ENCODE measurements at regions of chr9 and their contacts with region 1.

Region 1: DNA sequence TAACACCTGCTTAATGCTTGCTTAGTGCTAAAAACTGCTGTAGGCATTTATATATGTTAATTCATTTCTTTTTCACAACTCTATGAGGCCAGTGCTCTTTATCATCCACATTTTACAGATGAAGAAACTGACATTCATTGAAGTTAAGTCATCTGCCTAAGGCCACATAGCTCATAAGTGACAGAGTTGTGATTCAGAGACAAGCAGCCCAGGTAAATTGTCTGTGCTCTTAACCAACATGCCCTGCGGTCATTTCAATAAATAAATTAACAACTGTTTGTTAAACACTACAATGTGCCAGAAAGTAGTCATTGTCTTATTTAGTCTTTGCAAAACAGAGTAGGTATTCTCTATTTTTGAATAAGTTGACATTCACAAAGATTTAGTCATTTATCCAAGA is 1354.4 kb upstream of the C9orf72 start:
- DNase-seq: no peak

Region 2: DNA sequence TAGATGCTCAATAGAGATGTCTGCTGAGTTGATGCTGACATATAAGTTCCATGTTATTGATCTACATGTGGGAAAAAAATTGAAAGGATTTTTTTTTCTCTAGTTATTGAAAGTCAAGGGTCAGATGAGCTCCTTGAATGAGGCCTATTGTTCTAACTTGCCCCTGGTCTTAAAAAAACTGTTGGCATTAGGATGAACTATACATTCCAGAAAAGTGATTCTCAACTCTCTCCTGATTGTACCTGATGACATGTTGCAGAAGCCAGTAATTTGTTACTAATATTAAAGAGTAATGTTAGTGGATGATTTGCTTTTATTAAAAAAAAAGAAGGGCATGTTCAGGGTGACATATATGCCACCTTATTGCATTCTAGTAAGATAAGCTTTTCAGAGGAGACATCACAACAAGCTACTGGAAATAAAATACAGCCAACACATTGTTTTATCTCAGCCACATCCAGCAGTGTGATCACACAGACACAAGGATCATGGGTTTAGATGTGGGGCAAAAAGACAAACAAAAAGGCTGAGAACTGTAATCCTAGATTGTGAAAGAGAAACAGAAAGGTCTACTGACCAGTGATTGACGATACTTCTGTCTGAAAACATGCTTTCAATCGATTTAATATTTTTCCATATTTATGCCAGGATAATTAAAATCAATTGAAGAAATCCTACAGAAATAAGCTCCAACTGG is 40.4 kb before region 1 on chr9:
- intact Hi-C with region 1: loop called in 1 of 2 experiments (anchors 2 kb)
- DNase-seq: no peak

Region 3: DNA sequence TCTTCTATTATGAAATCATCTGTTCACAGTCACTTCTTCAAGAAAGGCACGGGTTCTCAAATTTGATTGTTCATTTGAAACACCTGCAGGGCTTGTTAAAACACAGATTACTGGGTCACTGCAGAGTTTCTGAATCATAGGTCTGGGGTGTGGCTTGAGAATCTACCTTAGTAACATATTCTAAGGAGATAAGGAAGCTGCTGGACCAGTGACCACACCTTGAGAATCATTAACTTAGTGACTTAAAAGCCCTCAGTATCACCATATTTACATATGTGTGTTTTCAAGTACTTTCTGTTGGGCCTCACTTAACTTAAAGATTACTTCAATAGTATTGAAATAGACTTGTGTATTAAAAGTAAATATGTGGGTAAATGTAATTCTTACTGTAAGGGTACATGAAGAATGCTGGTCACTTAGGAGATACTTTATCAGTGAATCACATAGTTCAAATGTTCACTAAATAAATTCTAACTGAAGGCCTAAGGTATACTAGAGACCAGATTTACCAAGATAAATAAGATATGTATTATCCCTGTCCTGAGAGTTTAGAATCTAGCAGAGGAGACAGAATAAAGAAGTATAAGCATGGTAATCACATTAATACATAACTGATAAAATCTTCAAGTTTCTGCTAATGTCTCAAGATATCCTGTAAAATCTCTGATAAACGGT is 12.3 kb before region 1 on chr9:
- intact Hi-C with region 1: no loop called
- DNase-seq: no peak

Region 4: DNA sequence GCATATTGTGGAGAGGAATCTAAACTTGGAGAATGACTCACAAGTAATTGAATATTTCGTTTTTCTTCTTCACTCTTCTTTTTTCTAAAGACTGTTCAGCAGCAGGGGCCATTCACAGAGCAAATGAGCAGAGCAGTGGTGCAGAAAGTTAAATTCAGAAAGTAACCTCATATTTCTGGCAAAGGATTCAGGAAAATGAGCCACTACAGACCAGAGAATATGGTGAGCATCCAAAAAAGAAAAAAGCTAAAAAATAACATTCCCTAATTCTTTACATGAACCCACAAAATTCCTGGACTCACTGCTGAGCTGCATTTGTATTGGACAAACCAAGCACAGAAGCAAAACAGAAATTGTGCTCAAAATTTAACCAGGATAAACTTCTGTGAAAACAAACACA is 132.3 kb after region 1 on chr9:
- intact Hi-C with region 1: no loop called
- DNase-seq: no peak

Region 5: DNA sequence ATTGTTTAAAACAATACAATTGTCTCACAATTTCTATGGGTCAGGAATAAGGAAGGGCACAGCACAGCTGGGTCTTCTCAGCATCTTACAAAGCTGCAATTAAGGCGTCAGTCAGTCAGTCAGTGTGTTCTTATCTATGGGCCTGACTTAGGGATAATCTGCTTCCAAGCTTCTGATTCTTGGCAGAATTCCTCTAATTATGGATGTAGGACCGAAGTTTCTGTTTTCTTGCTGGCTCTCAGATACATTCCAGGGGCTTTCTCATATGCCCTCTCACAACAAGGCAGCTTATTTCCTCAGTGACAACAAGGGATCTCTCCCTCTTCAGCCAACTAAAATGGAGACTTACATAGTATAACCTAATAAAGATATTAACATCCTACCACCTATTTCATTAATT is 1531.4 kb after region 1 on chr9:
- intact Hi-C with region 1: no loop called
- DNase-seq: no peak

Measured in posterior vena cava (tissue), 2 donors.